A549 (cell line): ENCODE measurements at regions of chr15 and their contacts with region 1.

Region 1: DNA sequence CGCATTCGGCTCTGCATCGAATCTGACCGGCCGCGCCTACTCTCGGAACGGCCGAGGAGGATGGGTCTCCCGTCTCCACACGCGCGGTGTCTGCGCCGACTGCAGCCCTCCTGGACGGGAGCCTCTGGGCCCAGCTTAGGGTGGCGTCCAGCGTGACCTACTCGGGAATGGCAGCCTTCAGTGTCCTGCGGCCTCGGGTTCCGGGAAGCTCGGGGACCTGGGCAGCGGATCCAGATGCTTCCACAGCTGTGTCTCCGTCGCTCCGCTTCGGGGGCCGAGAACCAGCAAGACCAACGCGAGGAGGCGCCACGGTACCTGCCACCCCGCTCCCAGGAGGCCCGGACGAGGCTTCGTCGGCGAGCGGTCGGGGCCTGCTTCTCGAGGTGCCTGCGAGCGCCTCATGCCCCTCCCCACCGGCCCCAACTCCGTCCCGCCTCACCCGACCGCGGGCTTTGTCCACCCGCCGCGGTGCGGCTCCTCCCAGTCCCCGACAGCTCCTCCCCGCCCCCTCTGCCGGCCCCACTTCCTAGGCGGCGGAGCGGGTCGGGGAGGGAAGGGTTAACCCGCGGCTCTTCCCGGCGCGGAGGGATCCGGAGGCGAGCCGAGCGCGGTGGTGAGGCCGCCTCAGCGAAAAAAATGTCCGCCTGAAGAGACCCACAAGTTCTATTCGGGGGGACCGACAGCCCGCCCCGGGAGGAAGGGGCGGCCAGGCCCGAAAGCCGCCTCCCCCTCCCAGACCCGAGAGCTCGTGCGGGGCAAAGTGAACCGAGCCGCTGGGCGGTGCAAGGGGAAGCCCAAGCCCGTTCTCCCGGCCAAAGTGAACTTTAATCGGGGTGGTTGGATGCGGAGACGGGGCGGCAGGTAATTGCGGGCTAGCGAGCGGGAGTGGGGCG is at the start of gene TCF12:
- DNase-seq: peak; percentile 91 to 99
- ATAC-seq: peak; percentile 88 to 95
- H3K4me3 ChIP-seq: peak within 1 kb of the TSS; percentile 99
- H3K27ac ChIP-seq: peak within 1 kb of the TSS; percentile 96 to 99
- H3K4me1 ChIP-seq: peaks cover 43% of the 10 kb centered on the region
- CTCF ChIP-seq: peak; percentile 46
- EP300 ChIP-seq: no peak
- POLR2A ChIP-seq: peak; percentile 85
- RAD21 ChIP-seq: peak; percentile 55 to 80
- polyA plus RNA-seq, gene TCF12: 121 and 165 TPM in 2 replicates

Region 2: DNA sequence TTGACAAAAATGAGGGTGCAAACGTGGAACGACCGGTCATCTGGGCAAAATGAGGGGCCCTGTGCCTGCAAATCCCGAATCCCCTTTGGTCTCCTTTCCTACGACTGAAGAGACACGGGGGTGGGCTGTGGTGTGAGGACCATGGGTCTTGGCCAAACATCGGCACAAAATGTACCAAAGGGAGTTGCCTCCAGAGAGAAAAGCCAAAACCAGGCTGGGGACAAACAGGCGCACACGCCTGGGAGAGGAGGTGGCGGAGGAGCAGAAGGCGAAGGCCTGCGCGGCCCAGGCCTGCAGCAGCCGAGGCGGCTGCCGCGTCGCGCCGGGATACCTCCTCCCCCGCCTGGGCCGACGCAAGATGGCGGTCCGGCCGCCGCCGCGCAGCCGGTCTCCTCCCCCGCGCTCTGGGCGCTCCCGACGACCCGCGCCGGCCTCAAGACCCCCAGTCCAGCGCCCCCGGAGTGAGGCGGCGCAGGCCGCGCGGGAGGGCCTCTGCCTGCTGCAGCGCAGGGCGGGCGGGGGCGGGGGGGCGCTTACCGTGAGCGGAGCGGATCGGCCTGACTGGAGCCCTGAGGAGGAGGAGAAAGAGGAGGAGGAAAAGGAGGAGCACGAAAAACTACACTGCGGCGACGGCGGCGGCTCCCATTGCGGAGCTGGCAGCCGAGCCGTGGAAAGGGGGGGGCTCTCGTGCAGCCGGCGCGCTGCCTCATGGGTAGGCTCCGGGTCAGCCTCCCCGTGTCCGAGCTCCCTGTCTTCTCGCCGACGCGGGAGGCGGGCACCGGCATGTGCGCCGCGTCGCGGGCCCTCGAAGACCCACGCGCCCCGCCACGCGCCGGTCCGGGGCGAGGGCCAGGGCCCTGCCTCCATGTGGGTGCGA is 185.1 kb before region 1 on chr15 and contains the start of gene ZNF280D:
- CTCF ChIA-PET with region 1: no interaction called
- POLR2A ChIA-PET with region 1: interaction called, 17 read pairs
- DNase-seq: peak; percentile 85 to 95
- ATAC-seq: peak; percentile 95 to 97
- H3K4me3 ChIP-seq: peak within 1 kb of the TSS; percentile 55
- H3K27ac ChIP-seq: peak within 1 kb of the TSS; percentile 93 to 98
- H3K4me1 ChIP-seq: peaks cover 23% of the 10 kb centered on the region
- CTCF ChIP-seq: no peak
- EP300 ChIP-seq: no peak
- POLR2A ChIP-seq: peak; percentile 61
- RAD21 ChIP-seq: 0 out of 5 replicates have a peak, but pooled peaks of 1 of the 2 experiments have one; percentile 20
- polyA plus RNA-seq, gene ZNF280D: 18.0 and 21.8 TPM in 2 replicates

Region 3: DNA sequence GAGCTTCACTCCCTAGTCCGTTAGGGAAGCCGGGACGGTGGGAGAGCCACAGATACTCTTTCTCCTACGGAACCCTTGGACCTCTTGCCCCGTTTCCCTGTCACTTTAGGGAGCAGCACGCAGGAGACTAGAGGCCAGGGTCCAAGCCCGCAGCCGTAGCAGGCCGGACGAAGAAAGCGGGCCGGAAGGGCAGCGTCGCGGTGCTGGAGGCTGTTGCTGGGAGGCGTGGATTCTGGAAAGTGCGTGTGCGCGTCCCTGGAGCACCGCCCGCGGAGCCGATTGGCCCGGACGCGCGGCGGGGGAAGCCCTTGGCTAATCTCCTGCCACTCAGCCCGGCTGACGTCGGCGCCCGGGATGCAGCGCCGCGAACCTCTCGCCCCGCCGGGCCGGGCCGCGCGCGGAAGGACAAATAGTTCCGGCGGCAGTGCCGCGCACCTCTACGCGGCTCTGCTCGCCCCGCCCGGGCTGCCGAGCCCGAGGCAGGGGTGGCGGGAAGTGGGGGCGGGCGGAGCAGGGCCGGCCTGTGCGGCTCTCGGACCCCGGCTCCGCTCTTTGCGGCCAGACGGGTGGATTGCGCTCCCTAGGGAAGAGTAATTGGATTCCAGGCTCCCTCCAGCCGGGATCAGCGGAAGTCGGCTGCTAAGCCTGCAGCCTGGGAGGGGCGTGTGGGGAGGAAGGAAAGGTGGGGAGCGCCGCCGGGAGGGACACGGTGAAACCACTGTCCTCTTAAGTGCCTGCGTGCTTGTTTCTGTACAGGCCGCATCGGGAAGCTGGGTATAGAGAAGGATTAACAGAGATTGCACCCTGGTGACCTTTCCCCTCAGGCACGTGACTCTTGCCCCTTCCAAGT is 31.1 kb before region 1 on chr15:
- CTCF ChIA-PET with region 1: interaction called, 6 read pairs
- POLR2A ChIA-PET with region 1: interaction called, 81 read pairs
- DNase-seq: peak; percentile 89 to 98
- ATAC-seq: peak; percentile 96 to 97
- H3K4me3 ChIP-seq: peak overlapping the region; percentile 53
- H3K27ac ChIP-seq: peak overlapping the region; percentile 92 to 95
- H3K4me1 ChIP-seq: peaks cover 14% of the 10 kb centered on the region
- CTCF ChIP-seq: peak; percentile 34; the same call in 2 of the 3 replicates
- EP300 ChIP-seq: peak; percentile 10 to 32; a peak in 1 of 5 replicates
- POLR2A ChIP-seq: peak; percentile 90
- RAD21 ChIP-seq: peak in 1 of 2 experiments; percentile 62; a peak in 4 of 5 replicates

Region 4: GRCh38 chr15:56929399-56929798 is 11.1 kb after region 1 on chr15:
- CTCF ChIA-PET with region 1: interaction called, 20 read pairs
- POLR2A ChIA-PET with region 1: interaction called, 6 read pairs
- DNase-seq: no peak
- ATAC-seq: no peak
- H3K4me3 ChIP-seq: no peak overlapping the region
- H3K27ac ChIP-seq: no peak overlapping the region
- H3K4me1 ChIP-seq: peaks cover 60% of the 10 kb centered on the region
- CTCF ChIP-seq: no peak
- EP300 ChIP-seq: no peak
- POLR2A ChIP-seq: no peak
- RAD21 ChIP-seq: no peak

Region 5: DNA sequence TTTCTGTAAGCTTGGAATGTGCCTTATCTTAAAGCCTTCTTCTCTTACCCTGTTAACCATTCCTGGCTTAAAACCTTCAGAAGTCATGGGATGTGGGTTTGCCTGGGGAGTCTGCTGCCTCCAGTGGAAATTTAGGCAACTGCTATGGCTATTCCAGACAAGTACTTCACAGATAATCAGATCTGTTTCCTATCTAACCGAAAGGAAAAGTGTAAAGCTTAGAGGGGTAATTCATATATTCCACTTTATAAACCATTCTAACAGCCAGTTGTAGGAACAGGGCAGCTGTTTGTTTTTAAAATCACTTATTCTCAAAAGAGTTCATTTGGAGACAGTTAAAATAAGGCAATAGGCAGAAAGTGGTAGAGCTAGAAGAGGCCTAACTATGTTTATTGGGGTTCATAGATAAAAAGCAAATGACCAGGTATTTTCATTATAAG is 220.1 kb after region 1 on chr15:
- CTCF ChIA-PET with region 1: interaction called, 13 read pairs
- POLR2A ChIA-PET with region 1: interaction called, 3 read pairs
- DNase-seq: peak; percentile 63 to 79
- ATAC-seq: peak; percentile 99
- H3K4me3 ChIP-seq: no peak overlapping the region
- H3K27ac ChIP-seq: no peak overlapping the region
- H3K4me1 ChIP-seq: peaks cover 9% of the 10 kb centered on the region; the same call in 1 of the 3 replicates
- CTCF ChIP-seq: peak; percentile 76
- EP300 ChIP-seq: no peak
- POLR2A ChIP-seq: no peak
- RAD21 ChIP-seq: peak; percentile 69 to 76